ENCODE measurements at regions of chr16 and their contacts with region 1.

Region 1: DNA sequence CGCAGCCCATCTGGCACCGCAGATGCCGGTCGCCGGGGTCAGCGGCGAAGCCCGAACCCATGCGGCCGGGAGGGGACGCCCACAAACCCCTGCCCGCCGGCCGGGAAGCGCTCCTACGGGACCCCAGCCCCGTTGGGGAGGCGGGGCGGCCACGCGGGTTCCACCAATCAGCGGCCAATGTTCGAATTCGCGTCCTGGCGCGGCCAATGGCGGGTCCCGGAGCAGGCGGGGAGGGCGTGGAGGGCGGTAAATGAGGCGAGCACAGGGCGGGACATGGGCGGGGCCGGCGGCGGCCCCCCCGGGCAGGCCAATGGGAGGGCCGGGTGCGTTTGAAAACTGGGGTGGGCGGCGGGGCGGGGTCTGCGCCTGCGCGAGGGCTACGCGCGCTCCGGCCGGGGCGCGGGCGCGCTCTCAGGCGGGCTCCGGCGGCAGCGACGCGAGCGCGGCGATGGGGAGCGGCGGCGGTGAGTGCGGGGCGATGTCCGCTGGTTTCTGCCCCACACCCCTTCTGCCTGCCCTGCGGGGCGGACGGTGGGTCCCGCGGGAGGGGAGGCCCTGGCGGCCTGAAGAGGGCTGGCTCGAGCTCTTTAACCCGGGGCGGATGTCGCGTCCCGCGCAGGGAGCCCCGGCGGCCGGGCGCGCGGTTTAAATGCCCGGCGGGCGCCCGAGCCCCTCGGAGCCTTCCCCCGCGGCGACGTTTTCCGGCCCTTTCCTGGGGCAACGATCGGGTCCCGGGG is at the start of gene CCNF:
- DNase-seq: peak; percentile 95
- H3K4me3 Mint-ChIP-seq: peak within 1 kb of the TSS; percentile 99
- H3K27ac Mint-ChIP-seq: peak within 1 kb of the TSS; percentile 88
- H3K4me1 Mint-ChIP-seq: peaks cover 27% of the 10 kb centered on the region
- H3K27me3 Mint-ChIP-seq: no peaks in the 10 kb centered on the region
- total RNA-seq, gene CCNF: 45.3 and 46.7 TPM in 2 replicates

Region 2: GRCh38 chr16:2251483-2252240 is 177.5 kb before region 1 on chr16 and contains the start of gene ECI1:
- intact Hi-C with region 1: loop called (anchors 1 kb)
- DNase-seq: peak; percentile 80
- H3K4me3 Mint-ChIP-seq: peak within 1 kb of the TSS; percentile 91
- H3K27ac Mint-ChIP-seq: peak within 1 kb of the TSS; percentile 94
- H3K4me1 Mint-ChIP-seq: peaks cover 10% of the 10 kb centered on the region
- H3K27me3 Mint-ChIP-seq: no peaks in the 10 kb centered on the region
- total RNA-seq, gene ECI1: 35.5 and 36.5 TPM in 2 replicates

Region 3: DNA sequence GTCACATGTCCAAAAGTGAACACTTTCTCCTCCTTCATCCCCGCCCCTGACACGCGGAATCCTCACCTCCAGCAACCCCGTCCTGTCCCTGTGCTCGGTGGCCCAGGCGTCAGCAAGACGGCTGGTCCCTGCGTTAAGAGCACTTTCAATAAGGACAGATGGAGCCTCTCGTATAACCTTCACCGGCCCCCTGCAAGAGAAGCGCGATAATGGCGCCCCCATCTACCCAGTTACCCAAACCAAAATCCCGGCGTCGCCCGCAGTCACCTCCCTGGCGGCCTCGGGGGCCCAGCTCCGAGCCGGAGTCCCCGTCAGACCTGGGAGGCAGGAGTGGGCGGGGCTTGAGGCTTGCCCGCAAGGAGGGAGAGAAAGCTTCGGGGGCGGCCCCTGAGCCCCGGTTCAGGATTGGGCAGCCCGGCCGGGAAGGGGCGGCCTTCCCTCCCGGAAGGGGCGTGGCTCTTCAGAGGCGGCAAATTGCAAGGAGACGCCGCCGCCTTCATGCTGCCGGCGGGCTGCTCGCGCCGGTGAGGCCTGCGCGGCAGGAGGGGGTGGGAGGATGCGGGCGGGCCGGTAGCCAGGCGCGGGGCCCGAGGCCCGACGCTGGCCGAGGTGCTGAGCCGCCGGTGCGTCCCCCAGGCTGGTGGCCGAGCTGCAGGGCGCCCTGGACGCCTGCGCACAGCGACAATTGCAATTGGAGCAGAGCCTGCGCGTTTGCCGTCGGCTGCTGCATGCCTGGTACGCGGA is 30.6 kb after region 1 on chr16 and contains the start of gene TEDC2:
- intact Hi-C with region 1: loop called (anchors 2 kb)
- DNase-seq: peak; percentile 96
- H3K4me3 Mint-ChIP-seq: peak within 1 kb of the TSS; percentile 86
- H3K27ac Mint-ChIP-seq: peak within 1 kb of the TSS; percentile 80
- H3K4me1 Mint-ChIP-seq: peaks cover 7% of the 10 kb centered on the region
- H3K27me3 Mint-ChIP-seq: no peaks in the 10 kb centered on the region
- total RNA-seq, gene TEDC2: 41.0 and 43.9 TPM in 2 replicates

Region 4: GRCh38 chr16:2500918-2501750 is 71.9 kb after region 1 on chr16:
- intact Hi-C with region 1: loop called (anchors 2 kb)
- DNase-seq: peak; percentile 67
- H3K4me3 Mint-ChIP-seq: no peak overlapping the region
- H3K27ac Mint-ChIP-seq: no peak overlapping the region
- H3K4me1 Mint-ChIP-seq: no peaks in the 10 kb centered on the region
- H3K27me3 Mint-ChIP-seq: no peaks in the 10 kb centered on the region

Region 5: GRCh38 chr16:2520784-2521531 is 91.8 kb after region 1 on chr16:
- intact Hi-C with region 1: no loop called
- DNase-seq: peak; percentile 58
- H3K4me3 Mint-ChIP-seq: peak overlapping the region; percentile 85
- H3K27ac Mint-ChIP-seq: peak overlapping the region; percentile 83
- H3K4me1 Mint-ChIP-seq: peaks cover 33% of the 10 kb centered on the region
- H3K27me3 Mint-ChIP-seq: no peaks in the 10 kb centered on the region